GM18951 (cell line): ENCODE measurements at regions of chr2 and their contacts with region 1.

Region 1: GRCh38 chr2:215931256-215931903 is 82.0 kb downstream of the MREG start:
- POLR2A ChIP-seq: no peak

Region 2: GRCh38 chr2:215454519-215455246 is 476.7 kb before region 1 on chr2:
- in situ Hi-C with region 1: loop called (anchors 10 kb)
- POLR2A ChIP-seq: no peak

Region 3: DNA sequence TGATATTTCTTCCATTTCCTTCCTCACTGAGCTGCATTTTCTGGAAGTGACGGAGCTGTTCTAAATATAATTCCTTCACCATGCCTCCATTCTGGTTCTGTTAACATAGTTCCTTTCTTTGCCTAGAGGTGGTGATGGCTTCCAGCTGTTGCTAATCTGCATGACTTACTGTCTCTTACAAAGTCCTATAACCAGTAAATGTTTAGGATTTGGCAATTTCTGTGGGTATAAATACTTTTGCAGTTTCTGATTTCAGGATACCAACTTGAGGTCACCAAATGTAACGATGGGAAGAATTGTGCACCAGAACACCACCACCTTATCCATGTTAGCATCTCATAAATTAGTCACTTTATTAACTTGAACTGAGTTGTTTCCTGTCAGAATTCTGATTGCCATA is 393.8 kb before region 1 on chr2:
- in situ Hi-C with region 1: no loop called
- POLR2A ChIP-seq: no peak